Aorta (tissue), 5 donors: ENCODE measurements at regions of chr15 and their contacts with region 1.

Region 1: DNA sequence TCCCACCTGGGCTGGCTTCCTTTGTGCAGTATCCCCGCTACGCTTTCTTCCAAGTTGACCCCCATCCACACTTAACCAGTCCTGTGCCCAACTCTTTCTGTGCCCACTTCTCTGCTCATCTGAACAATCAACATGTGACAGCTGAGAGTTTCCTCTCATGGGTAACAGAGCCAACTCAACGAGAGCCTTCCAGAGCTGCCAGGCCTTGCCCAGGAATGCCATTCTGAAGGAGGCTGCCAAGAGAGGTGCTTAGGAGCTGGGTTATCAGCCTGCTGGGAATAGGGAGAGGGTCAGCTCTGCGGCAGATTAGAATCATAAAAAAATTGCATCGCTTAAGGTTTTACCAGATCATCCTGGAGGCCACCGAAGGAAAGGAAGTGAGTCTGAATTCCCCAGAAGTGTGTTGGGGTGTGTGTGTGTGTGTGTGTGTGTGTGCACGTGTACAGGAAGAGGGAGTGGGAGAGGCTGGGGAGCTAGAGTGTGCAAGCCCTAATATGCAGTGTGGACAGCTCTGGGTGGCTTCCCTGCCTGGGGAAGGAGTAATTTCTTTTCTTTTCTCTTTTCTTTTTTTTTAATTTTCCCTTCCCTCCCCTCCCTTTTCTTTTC is 66.7 kb downstream of the ITGA11 start:
- DNase-seq: no peak
- ATAC-seq: peak; percentile 59
- H3K4me3 ChIP-seq: no peak overlapping the region
- H3K27ac ChIP-seq: peak overlapping the region; percentile 93 to 99
- H3K4me1 ChIP-seq: peaks cover 0 to 10% of the 10 kb centered on the region in 2 donors
- H3K27me3 ChIP-seq: no peaks in the 10 kb centered on the region

Region 2: GRCh38 chr15:68335251-68335650 is 30.0 kb before region 1 on chr15:
- intact Hi-C with region 1: loop called in 1 of 2 experiments (anchors 2 kb)
- DNase-seq: peak; percentile 83 to 89
- ATAC-seq: peak; percentile 61
- H3K4me3 ChIP-seq: no peak overlapping the region
- H3K27ac ChIP-seq: peak overlapping the region; percentile 15 to 93
- H3K4me1 ChIP-seq: peaks cover 2 to 5% of the 10 kb centered on the region in 2 donors
- H3K27me3 ChIP-seq: no peaks in the 10 kb centered on the region

Region 3: GRCh38 chr15:68347392-68347791 is 17.9 kb before region 1 on chr15:
- intact Hi-C with region 1: no loop called
- DNase-seq: no peak
- ATAC-seq: no peak
- H3K4me3 ChIP-seq: no peak overlapping the region
- H3K27ac ChIP-seq: peak overlapping the region; percentile 50 to 78
- H3K4me1 ChIP-seq: no peaks in the 10 kb centered on the region
- H3K27me3 ChIP-seq: no peaks in the 10 kb centered on the region

Region 4: DNA sequence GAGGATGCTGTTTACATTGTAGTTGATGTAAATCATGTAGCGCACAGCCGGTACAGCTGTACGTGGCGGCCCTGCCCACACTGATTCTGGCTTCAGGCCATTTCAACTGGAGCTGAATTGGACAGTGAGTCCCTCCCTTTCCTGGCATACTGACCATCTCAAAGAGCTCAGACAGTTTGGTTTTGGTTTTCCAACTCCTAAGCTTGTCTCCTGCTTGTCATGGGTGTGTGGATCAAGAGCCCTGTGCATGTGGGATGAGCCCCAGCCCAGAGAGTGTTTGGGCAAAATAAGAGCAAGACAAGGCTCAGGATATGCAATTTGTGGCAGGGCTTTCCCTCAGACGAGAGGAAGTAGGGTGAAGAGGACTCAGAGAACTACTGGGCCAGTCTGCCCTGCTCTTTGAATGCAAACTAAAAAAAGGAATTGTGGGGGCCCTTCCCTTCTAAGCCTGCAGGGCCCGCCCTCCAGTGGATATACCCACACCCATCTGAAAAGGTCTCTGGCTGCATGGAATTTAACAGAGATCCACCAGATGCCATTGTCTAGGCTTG is 53.4 kb after region 1 on chr15:
- intact Hi-C with region 1: no loop called
- DNase-seq: no peak
- ATAC-seq: peak; percentile 36
- H3K4me3 ChIP-seq: no peak overlapping the region
- H3K27ac ChIP-seq: peak overlapping the region in 1 of 2 donors; percentile 56
- H3K4me1 ChIP-seq: peaks cover 0 to 6% of the 10 kb centered on the region in 2 donors
- H3K27me3 ChIP-seq: no peaks in the 10 kb centered on the region

Region 5: GRCh38 chr15:68484696-68485400 is 119.6 kb after region 1 on chr15:
- intact Hi-C with region 1: loop called in 1 of 2 experiments (anchors 5 kb)
- DNase-seq: peak; percentile 80 to 84
- ATAC-seq: peak; percentile 80
- H3K4me3 ChIP-seq: no peak overlapping the region
- H3K27ac ChIP-seq: peak overlapping the region; percentile 95 to 99
- H3K4me1 ChIP-seq: peaks cover 12 to 13% of the 10 kb centered on the region in 2 donors
- H3K27me3 ChIP-seq: no peaks in the 10 kb centered on the region

Region 6: GRCh38 chr15:68844856-68845550 is 479.8 kb after region 1 on chr15:
- intact Hi-C with region 1: no loop called
- DNase-seq: no peak
- ATAC-seq: no peak
- H3K4me3 ChIP-seq: no peak overlapping the region
- H3K27ac ChIP-seq: no peak overlapping the region
- H3K4me1 ChIP-seq: no peaks in the 10 kb centered on the region
- H3K27me3 ChIP-seq: no peaks in the 10 kb centered on the region